ENCODE measurements at regions of chr11 and their contacts with region 1.

Region 1: GRCh38 chr11:33065445-33066178 is 26.2 kb downstream of the TCP11L1 start:
- DNase-seq: peak; percentile 64
- ATAC-seq: peak; percentile 79
- H3K4me3 ChIP-seq: no peak overlapping the region
- H3K4me3 Mint-ChIP-seq: no peak overlapping the region
- H3K27ac ChIP-seq: no peak overlapping the region
- H3K27ac Mint-ChIP-seq: peak overlapping the region; percentile 41
- H3K4me1 ChIP-seq: peaks cover 16% of the 10 kb centered on the region in 2 donors
- H3K4me1 Mint-ChIP-seq: peaks cover 25% of the 10 kb centered on the region
- H3K27me3 ChIP-seq: no peaks in the 10 kb centered on the region
- H3K27me3 Mint-ChIP-seq: no peaks in the 10 kb centered on the region
- CTCF ChIP-seq: peak; percentile 86

Region 2: DNA sequence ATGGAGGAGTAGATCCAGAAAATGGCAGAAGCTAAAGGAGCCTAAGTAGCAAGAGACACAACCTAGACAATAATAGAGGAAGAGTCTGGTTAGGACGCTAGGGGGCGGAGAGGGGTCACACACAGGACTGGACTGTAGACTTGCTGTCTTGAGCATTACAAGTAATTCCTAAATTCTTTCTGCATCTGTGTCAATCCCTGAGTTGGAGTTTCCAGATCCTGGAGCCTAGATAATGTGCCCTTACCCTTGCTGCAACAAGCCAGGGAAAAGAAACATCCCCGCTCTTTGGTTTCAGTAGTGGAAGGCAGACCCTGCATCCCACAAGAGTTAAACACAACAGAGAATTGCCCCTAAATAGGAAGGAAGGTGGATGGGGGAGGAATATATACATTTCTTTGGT is 256.3 kb before region 1 on chr11:
- CTCF ChIA-PET with region 1: interaction called, 13 read pairs
- POLR2A ChIA-PET with region 1: no interaction called
- intact Hi-C with region 1: loop called (anchors 1 kb)
- DNase-seq: peak; percentile 49
- ATAC-seq: peak; percentile 61
- H3K4me3 ChIP-seq: no peak overlapping the region
- H3K4me3 Mint-ChIP-seq: no peak overlapping the region
- H3K27ac ChIP-seq: no peak overlapping the region
- H3K27ac Mint-ChIP-seq: no peak overlapping the region
- H3K4me1 ChIP-seq: no peaks in the 10 kb centered on the region
- H3K4me1 Mint-ChIP-seq: no peaks in the 10 kb centered on the region
- H3K27me3 ChIP-seq: no peaks in the 10 kb centered on the region
- H3K27me3 Mint-ChIP-seq: no peaks in the 10 kb centered on the region
- CTCF ChIP-seq: peak; percentile 67

Region 3: DNA sequence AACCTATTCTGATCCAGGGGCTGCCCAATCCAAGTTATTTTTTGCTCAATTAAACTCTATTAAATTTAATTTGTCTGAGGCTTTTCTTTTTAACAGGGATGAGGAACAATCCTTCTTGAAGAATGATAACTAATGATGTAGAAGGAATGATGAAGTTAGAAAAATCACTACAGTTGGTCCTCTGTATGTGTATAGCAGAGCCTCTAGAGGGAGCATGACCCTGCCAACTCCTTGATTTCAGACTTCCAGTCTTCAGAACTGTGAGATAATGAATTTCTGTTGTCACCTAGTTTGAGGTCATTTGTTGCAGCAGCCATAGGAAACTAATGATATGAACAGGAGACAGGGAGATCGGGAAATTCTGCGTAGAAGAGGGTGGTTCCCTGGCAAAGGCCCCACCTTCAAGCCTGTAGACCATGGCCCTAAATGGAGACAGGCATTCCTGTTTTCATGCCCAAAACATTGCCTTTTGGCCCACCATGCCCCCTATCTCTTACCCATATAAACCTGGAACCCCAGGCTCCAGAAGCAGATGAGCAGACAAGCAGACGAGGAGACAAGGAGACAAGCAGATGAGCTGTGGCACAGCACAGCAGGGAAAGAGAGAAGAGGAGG is 180.7 kb before region 1 on chr11:
- CTCF ChIA-PET with region 1: interaction called, 13 read pairs
- POLR2A ChIA-PET with region 1: no interaction called
- intact Hi-C with region 1: no loop called
- DNase-seq: no peak
- ATAC-seq: no peak
- H3K4me3 ChIP-seq: no peak overlapping the region
- H3K4me3 Mint-ChIP-seq: no peak overlapping the region
- H3K27ac ChIP-seq: no peak overlapping the region
- H3K27ac Mint-ChIP-seq: no peak overlapping the region
- H3K4me1 ChIP-seq: no peaks in the 10 kb centered on the region
- H3K4me1 Mint-ChIP-seq: no peaks in the 10 kb centered on the region
- H3K27me3 ChIP-seq: no peaks in the 10 kb centered on the region
- H3K27me3 Mint-ChIP-seq: peaks cover 4% of the 10 kb centered on the region
- CTCF ChIP-seq: peak; percentile 42

Region 4: GRCh38 chr11:32893343-32894148 is 172.1 kb before region 1 on chr11:
- CTCF ChIA-PET with region 1: interaction called, 11 read pairs
- POLR2A ChIA-PET with region 1: no interaction called
- intact Hi-C with region 1: no loop called
- DNase-seq: peak; percentile 79
- ATAC-seq: peak; percentile 44
- H3K4me3 ChIP-seq: peak overlapping the region; percentile 22 to 88 (median 83)
- H3K4me3 Mint-ChIP-seq: peak overlapping the region; percentile 88
- H3K27ac ChIP-seq: peak overlapping the region; percentile 61 to 70
- H3K27ac Mint-ChIP-seq: peak overlapping the region; percentile 93
- H3K4me1 ChIP-seq: peaks cover 12 to 16% of the 10 kb centered on the region in 2 donors
- H3K4me1 Mint-ChIP-seq: peaks cover 36% of the 10 kb centered on the region
- H3K27me3 ChIP-seq: no peaks in the 10 kb centered on the region
- H3K27me3 Mint-ChIP-seq: no peaks in the 10 kb centered on the region
- CTCF ChIP-seq: peak; percentile 63

Region 5: GRCh38 chr11:32960553-32961164 is 105.0 kb before region 1 on chr11:
- CTCF ChIA-PET with region 1: interaction called, 186 read pairs
- POLR2A ChIA-PET with region 1: no interaction called
- intact Hi-C with region 1: loop called (anchors 1 kb)
- DNase-seq: peak; percentile 59
- ATAC-seq: no peak
- H3K4me3 ChIP-seq: no peak overlapping the region
- H3K4me3 Mint-ChIP-seq: no peak overlapping the region
- H3K27ac ChIP-seq: no peak overlapping the region
- H3K27ac Mint-ChIP-seq: no peak overlapping the region
- H3K4me1 ChIP-seq: no peaks in the 10 kb centered on the region
- H3K4me1 Mint-ChIP-seq: no peaks in the 10 kb centered on the region
- H3K27me3 ChIP-seq: no peaks in the 10 kb centered on the region
- H3K27me3 Mint-ChIP-seq: no peaks in the 10 kb centered on the region
- CTCF ChIP-seq: peak; percentile 81

Region 6: GRCh38 chr11:33039274-33040032 is 26.2 kb before region 1 on chr11 and contains the start of gene TCP11L1:
- CTCF ChIA-PET with region 1: interaction called, 19 read pairs
- POLR2A ChIA-PET with region 1: interaction called, 3 read pairs
- intact Hi-C with region 1: no loop called
- DNase-seq: peak; percentile 90
- ATAC-seq: peak; percentile 84
- H3K4me3 ChIP-seq: peak within 1 kb of the TSS; percentile 77 to 99 (median 95)
- H3K4me3 Mint-ChIP-seq: peak within 1 kb of the TSS; percentile 96
- H3K27ac ChIP-seq: peak within 1 kb of the TSS; percentile 79 to 88
- H3K27ac Mint-ChIP-seq: peak within 1 kb of the TSS; percentile 94
- H3K4me1 ChIP-seq: peaks cover 8 to 18% of the 10 kb centered on the region in 2 donors
- H3K4me1 Mint-ChIP-seq: peaks cover 16% of the 10 kb centered on the region
- H3K27me3 ChIP-seq: no peaks in the 10 kb centered on the region
- H3K27me3 Mint-ChIP-seq: peaks cover 8% of the 10 kb centered on the region
- CTCF ChIP-seq: no peak
- total RNA-seq, gene TCP11L1: 19.7 and 19.8 TPM in 2 replicates

Region 7: DNA sequence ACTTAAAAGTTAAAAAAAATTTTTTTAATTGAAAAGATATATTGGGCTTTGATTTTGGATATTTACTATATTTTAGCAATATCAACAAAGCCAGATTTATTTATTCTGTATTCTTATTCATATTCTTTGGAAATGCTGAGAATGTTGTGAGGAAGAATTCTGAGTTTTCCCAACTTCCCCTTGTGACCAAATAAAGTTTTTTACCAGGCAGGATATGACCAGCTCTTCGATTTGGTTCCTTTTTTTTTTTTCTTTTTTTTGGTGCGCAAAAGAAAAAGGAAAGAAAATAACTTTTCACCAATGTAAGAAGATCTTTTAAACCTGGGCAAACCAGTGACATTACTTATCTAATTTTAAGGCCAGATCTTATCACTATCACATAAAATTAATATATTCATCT is 13.4 kb before region 1 on chr11:
- CTCF ChIA-PET with region 1: interaction called, 12 read pairs
- POLR2A ChIA-PET with region 1: no interaction called
- intact Hi-C with region 1: no loop called
- DNase-seq: no peak
- ATAC-seq: no peak
- H3K4me3 ChIP-seq: no peak overlapping the region
- H3K4me3 Mint-ChIP-seq: peak overlapping the region; percentile 18
- H3K27ac ChIP-seq: peak overlapping the region in 1 of 2 donors; percentile 41
- H3K27ac Mint-ChIP-seq: peak overlapping the region; percentile 27
- H3K4me1 ChIP-seq: peaks cover 0 to 3% of the 10 kb centered on the region in 2 donors
- H3K4me1 Mint-ChIP-seq: peaks cover 8% of the 10 kb centered on the region
- H3K27me3 ChIP-seq: no peaks in the 10 kb centered on the region
- H3K27me3 Mint-ChIP-seq: no peaks in the 10 kb centered on the region
- CTCF ChIP-seq: no peak

Region 8: DNA sequence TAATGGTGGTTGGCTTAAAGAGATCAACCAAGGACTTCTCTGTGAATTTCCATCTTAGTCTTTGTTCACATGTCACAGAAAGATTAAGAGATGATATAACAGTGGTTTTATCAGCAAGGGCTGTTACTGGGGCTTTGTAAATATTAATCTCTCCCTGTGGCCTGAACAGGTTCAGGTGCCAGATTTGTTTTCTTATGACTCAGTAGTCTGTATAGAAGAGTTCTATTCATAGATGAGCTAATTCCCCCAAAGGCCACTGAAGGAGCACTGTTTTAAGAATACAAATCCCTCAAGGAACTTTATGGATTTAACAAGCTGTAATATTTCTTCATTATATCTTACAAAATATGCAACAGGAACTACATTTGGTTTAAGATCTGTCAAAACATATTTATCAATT is 24.2 kb after region 1 on chr11:
- CTCF ChIA-PET with region 1: no interaction called
- POLR2A ChIA-PET with region 1: no interaction called
- intact Hi-C with region 1: no loop called
- DNase-seq: no peak
- ATAC-seq: no peak
- H3K4me3 ChIP-seq: no peak overlapping the region
- H3K4me3 Mint-ChIP-seq: no peak overlapping the region
- H3K27ac ChIP-seq: no peak overlapping the region
- H3K27ac Mint-ChIP-seq: peak overlapping the region; percentile 13
- H3K4me1 ChIP-seq: no peaks in the 10 kb centered on the region
- H3K4me1 Mint-ChIP-seq: no peaks in the 10 kb centered on the region
- H3K27me3 ChIP-seq: no peaks in the 10 kb centered on the region
- H3K27me3 Mint-ChIP-seq: no peaks in the 10 kb centered on the region
- CTCF ChIP-seq: no peak

Measured in B cell (primary cell).